GM10248 (cell line): ENCODE measurements at regions of chr19 and their contacts with region 1.

Region 1: DNA sequence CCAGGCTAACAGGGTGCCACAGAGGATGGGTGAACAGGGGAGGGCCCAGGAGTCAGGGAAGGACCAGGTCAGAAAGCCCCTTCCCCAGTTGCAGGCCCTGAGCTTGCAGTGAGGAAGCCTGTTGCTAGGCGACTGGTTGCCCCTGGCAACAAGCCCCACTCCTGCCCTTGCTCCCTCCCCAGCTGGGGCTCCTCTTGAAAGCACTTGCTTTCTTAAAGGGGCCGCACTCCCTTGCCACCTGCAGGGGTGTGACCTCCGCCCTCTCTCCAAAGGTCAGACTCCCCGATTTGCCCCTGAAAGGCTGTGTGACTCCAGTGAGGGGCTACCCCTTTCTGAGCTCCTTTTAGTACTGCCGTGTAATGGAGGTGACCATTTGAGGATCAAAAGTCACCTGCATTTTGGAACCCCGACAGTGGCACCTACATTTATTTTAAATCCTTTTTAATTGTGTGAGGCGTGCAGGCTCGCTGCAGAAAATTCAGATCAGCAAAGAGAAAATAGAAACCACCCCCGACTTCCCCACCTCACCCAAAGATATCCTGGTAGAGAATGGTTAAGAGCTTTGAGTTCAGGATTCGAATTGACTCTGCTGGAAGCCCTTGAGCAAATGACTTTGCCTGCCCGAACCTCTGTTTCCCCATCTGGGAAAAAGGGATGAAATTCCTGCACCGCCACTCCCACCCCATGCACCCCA is 4.8 kb downstream of the FCHO1 start:
- DNase-seq: peak; percentile 84
- CTCF ChIP-seq: no peak

Region 2: DNA sequence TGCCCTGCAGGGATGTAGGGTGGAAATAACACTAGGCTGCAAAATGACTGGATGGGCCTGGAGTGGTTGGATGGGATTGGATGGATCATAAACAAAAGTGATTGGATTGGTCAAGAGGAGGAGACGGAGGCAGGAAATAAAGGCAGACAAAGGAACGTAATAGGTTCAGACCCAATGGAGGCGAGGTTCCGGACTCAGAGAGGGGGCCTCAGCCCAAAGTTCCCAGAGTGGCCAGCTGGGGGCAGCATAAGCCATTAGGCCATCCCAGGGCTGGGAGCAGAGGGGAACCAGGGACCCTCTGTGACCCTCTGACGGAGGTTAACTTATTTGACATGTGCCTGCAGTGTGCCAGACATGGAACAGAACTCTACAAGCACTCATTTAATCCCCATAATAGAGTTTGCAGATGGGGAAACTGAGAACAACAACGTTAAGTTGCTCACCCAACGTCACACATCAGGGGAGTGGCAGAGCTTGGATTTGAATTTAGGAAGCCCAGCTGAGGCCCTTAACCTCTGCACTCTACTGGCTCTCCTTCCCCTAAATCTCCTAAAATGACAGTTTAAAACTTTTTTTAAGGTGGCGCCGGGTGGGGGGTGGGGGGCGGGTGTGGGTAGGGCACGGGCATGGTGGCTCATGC is 52.2 kb before region 1 on chr19:
- CTCF ChIA-PET with region 1: interaction called, 13 read pairs
- POLR2A ChIA-PET with region 1: no interaction called
- DNase-seq: peak; percentile 84
- CTCF ChIP-seq: peak; percentile 86

Region 3: DNA sequence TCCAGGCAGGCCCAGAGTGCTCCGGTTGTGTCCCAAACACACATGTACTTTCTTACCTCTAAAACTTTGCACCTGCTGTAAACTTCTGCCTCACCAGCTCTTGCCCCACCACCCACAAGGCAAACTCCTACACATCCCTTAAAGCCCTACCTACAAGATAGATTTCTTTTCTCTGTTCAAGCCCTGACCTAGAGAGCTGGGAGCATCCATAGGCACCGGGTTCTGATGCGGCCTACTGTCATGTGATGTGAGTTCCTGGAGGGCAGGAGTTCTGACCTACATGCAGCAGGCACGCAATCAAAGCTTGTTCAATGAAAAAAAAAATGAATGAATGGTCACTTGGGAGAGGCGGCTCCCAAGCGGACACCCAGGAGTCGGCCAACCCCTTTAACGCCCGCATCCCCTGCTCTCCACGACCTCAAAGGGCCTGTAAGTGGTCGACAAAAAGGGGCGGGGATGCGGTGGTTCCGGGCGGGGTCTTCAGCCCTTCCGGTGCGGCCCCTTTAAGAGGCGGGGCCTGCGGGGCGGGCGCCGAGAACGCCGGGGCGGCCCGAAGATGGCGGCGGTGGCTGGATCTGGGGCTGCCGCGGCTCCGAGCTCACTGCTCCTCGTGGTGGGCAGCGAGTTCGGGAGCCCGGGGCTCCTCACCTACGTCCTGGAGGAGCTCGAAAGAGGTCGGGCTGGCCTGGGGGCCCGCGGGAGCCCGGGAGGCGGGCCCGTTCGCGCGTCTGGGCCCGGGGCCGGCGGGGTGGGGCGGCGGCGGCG is 37.0 kb before region 1 on chr19 and contains the start of gene MAP1S:
- CTCF ChIA-PET with region 1: interaction called, 15 read pairs
- POLR2A ChIA-PET with region 1: interaction called, 3 read pairs
- DNase-seq: peak; percentile 92
- CTCF ChIP-seq: no peak

Region 4: DNA sequence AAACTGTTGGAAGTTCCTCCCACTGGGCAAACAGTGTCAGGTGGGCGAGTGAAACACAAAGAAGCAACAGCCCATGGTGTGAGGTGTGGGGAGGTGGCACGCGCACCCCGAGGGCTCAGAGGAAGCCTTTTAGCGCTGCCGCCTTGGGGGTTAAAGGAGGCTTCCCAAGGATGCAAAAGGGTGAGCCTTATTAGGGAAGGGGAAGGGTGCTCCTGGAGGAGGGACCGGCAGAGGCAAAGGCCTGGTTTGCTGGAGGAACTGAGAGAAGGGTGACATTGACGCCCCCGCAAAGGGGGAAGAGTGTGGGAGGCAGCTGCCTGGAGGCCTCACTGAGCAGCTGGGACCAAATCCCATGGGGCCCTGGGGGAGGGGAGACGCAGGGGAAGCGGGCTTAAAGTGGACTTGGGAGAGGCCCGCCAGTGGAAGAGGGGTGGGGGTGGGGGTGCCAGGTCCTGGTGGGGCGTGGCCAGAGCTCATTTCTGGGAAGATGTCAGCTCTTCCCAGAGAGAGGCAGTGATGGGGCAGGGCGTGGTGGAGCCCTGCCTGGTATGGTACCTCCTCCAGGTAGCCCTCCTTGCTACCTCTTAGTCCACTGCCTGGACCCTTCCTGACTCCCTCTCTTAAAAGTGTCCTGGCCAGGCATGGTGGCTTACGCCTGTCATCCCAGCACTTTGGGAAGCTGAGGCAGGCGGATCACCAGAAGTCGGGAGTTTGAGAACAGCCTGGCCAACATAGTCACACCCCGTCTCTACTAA is 16.8 kb before region 1 on chr19:
- CTCF ChIA-PET with region 1: interaction called, 31 read pairs
- POLR2A ChIA-PET with region 1: interaction called, 3 read pairs
- DNase-seq: peak; percentile 78
- CTCF ChIP-seq: no peak

Region 5: DNA sequence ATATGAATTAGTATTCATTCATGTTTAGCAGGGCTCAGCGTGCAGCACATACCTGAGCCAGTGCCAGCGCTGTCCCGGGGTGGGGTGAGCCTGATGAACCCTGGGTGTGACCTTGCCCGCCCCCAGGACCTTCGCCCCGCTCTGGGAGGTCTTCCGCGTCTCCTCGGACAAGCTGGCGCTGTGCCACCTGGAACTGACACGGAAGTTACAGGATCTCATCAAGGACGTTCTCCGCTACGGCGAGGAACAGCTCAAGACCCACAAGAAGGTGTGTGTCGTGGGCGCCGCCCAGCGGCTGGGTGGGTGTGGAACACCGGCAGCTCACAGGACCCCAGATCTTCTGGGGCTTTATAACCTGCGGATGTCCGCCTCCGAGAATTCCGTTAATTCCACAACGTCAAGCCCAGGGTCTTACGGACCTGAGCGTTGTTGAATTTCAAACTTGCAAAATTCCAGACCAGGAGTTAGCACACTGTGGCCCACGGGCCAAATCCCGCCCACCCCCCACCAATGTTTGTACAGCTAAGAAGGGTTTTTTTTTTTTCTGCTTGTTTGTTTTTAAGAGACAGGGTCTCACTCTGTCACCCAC is 10.5 kb after region 1 on chr19:
- CTCF ChIA-PET with region 1: interaction called, 151 read pairs
- POLR2A ChIA-PET with region 1: interaction called, 5 read pairs
- DNase-seq: peak; percentile 70
- CTCF ChIP-seq: peak; percentile 75

Region 6: DNA sequence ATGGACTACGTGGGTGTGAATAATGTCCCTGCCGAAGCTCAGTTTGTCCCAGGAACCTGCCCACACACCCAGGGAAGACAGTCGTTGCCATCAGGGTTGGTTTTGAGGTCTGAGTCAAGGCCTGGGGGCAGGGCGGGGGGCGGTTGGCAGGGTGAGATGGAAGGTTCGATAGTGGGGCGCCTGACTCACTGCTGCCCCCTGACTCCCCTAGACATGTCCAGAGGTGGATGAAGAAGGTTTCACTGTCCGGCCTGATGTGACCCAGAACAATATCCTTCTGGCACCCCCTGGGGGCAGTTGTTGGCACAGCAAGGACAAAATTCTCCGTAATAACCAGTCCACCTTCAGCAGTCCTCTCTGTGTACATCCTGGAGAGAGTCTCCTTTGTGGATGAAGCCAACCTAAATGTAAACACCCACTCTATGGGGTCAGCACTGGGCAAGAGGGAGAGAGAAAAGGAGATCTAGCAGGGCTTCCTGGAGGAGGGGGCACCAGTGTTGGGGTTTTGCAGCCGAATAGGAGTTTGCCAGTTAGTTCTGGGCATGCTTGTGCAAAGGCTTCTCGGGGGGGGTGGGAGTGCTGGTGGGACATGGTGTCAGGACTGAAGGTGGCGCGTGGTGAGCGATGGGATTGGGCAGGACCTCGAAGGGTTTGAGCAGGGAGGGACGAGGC is 19.3 kb after region 1 on chr19:
- CTCF ChIA-PET with region 1: interaction called, 151 read pairs
- POLR2A ChIA-PET with region 1: interaction called, 3 read pairs
- DNase-seq: no peak
- CTCF ChIP-seq: peak; percentile 38

Region 7: DNA sequence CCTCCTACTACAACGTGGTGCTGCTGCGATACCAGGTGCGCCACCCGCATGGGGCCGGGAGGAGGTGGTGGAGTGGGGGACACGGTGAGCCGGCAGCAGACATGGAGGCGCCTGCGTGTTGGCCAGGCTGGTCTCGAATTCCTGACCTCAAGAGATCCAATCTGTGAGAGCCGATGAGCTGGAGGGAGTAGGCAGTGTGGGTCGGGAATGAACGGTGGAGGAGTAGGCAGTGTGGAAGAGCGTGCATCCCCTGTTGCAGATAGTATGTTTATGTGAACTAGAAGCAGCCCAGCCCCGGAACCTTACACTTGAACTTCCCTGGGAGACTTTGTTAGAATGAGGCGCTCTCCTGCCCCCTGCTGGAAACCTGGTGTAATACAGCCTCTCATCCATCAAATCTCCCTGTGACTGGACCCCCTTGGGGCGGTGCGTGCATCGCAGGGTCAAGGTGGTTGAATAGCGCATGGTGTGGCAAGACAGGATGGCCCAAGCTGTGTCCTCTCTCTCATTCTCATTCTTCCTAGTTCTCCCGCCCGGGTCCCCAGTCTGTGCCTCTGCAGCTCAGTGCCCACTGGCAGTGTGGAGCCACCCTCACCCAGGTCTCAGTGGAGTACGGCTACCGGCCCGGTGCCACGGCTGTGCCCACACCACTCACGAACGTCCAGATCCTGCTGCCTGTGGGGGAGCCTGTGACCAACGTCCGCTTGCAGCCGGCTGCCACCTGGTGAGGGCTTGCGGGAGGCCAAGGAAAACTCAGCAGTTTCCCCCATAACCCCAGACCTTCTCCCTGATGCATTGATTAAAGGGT is 28.3 kb after region 1 on chr19:
- CTCF ChIA-PET with region 1: interaction called, 22 read pairs
- POLR2A ChIA-PET with region 1: interaction called, 8 read pairs
- DNase-seq: peak; percentile 85
- CTCF ChIP-seq: peak; percentile 76